Left ventricle myocardium superior (tissue), 1 donor: ENCODE measurements at regions of chr7 and their contacts with region 1.

Region 1: DNA sequence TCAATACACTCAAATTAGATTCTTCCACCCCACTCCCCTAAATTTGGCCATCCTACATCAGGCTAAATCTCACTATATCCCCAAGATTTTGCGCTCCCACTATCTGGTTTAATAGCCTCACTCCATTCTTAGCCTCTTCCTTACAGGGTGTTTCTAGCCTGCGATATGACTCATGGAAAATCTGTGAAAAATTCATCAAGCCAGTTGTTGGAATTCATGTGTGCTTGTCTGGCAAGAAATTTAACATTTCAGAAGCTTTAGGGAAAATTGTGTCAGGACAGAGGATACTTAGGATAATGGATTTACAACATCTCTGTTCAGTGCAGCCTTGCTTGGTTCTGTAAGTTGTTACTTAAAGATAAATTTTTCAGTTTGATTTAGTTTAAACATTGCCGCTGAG is 1249.9 kb upstream of the AUTS2 start:
- DNase-seq: no peak
- ATAC-seq: no peak

Region 2: GRCh38 chr7:68288144-68288593 is 60.2 kb before region 1 on chr7:
- intact Hi-C with region 1: loop called (anchors 10 kb)
- DNase-seq: no peak
- ATAC-seq: no peak

Region 3: DNA sequence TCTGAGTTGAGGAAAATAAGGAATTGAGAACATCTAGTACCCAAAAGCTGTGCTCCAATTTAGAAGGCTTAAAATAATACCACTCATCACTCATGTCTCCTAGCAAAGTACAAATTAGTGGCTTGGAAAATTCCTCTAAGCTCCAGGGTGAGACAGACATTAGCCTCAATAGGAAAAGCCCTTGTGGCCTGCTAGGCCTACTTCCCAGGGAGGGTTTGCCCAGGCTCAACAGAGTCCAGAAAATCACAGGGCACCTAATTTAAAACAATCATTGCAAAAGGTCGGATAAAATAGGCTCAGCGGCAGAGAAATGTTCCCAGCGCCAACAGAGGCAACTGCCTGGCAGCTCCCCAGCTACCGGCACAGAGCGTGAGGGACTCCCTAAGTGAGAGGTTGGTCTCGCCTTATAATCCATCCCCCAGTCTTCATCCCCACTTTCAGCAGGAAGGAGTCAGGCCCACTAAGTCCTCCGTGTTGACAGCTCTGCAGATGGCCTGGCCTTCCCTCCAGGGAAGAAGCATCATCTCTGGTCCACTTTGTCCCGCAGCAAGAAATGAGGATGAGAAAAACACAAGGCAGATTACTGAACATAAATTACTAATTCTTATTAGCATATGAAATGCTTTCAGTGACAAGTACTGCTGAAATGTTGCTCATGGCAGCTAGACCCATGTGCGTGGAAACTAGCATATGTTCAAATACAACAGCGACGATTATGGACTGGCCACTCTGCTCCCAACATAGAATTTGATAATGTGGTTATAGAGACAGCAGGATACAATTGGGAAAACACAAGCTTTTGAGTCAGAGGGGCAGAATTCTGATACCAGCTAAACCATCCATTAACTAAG is 72.2 kb after region 1 on chr7:
- intact Hi-C with region 1: no loop called
- DNase-seq: peak; percentile 49
- ATAC-seq: peak; percentile 91